ENCODE measurements at regions of chr11 and their contacts with region 1.

Region 1: DNA sequence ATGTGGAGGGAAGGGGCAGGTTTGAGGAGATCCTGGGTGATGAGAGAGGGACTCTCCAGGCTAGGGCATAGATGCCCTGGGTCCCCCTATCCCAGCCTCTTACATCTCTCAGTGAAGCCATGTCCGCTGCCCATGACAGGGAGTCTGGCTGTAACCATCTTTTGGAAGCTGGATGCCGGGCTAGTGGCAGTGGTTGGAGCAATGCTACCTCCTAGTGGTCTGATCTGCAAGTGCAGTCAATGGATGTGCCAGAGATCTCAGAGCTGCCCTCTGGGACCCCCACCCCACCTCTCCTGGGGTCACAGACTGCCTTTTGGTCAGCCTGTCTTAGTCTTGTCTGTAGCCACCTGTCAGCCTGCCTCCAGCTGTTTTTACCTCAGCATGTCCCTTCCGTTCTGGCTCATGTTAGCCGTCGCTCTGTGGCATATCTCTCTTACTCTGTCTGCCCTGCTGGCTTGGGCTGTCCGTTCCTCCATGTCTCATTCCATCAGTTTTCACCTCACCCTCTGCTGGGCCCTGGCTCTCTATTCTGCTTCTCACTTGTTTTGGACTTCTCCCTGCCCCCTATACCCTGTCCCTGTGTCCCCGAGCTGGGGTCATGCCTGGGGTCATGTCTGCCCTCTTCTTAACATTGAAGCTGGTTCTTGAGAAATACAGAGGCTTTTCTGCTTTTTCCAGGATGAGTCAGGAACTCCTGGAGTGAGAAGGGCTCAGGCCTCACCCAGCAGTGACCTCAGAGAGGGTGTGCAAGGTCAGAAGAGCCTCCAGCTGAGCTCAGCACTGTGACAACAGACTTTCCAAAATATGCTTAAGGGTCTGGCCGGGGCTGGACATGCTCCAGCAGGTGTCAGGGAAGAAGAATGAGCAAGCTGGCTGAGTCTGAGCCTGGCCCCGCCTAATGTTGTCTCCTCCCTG is 52.0 kb upstream of the THY1 start:
- DNase-seq: peak; percentile 27
- H3K4me3 Mint-ChIP-seq: no peak overlapping the region
- H3K27ac Mint-ChIP-seq: no peak overlapping the region
- H3K4me1 Mint-ChIP-seq: peaks cover 4% of the 10 kb centered on the region
- H3K27me3 Mint-ChIP-seq: peaks cover 1% of the 10 kb centered on the region

Region 2: GRCh38 chr11:118740892-118741291 is 734.0 kb before region 1 on chr11:
- intact Hi-C with region 1: no loop called
- DNase-seq: no peak
- H3K4me3 Mint-ChIP-seq: no peak overlapping the region
- H3K27ac Mint-ChIP-seq: no peak overlapping the region
- H3K4me1 Mint-ChIP-seq: no peaks in the 10 kb centered on the region
- H3K27me3 Mint-ChIP-seq: peaks cover 9% of the 10 kb centered on the region

Region 3: GRCh38 chr11:119381181-119381988 is 93.6 kb before region 1 on chr11 and contains the start of gene USP2:
- intact Hi-C with region 1: loop called (anchors 2 kb)
- DNase-seq: peak; percentile 95
- H3K4me3 Mint-ChIP-seq: no peak within 1 kb of the TSS
- H3K27ac Mint-ChIP-seq: no peak within 1 kb of the TSS
- H3K4me1 Mint-ChIP-seq: peaks cover 12% of the 10 kb centered on the region
- H3K27me3 Mint-ChIP-seq: peaks cover 3% of the 10 kb centered on the region
- total RNA-seq, gene USP2: 1.0 and 1.1 TPM in 2 replicates

Region 4: DNA sequence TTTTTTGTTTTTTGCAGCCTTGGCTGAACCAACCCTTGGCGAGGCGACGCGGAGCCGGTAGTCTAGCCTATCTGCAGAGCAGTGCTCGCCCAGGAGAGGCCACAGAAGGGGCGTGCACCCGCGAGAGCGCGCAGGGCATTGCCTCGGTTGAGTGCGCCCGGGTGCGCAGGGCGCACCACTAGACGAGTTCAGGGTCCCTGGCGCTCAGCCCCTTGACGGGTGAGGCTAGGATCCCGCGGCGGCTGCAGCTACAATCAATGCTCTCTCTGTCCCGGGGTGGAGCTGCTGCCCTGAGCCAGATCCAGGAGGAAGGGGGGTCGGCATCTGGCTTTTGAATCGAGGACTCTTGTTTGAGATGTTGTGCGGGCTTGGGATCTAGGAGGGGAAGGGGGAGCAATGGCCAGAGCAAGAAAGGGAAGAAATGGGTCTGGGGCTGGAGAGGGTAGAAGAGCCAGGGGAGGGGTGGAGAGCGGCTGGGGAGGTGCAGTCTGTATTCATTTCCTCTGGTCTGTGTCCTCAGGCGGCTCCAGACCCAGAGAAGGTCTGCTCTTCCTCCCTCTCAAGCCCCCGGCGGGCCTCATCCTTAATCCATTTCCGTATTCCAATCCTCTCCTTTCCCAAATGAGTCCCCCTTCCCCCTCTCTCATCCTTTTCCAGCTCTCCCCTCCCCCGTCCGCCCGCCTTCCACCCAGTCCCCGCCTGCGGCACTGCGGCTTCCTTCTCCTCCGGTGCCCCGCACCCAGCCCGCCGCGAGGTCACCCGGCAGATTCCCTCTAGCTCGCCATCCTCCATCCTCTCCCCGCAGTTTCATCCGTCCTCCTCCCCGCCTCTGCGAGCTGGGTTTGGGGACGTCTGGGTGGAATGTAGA is 52.8 kb before region 1 on chr11:
- intact Hi-C with region 1: loop called (anchors 10 kb)
- DNase-seq: no peak
- H3K4me3 Mint-ChIP-seq: peak overlapping the region; percentile 82
- H3K27ac Mint-ChIP-seq: peak overlapping the region; percentile 62
- H3K4me1 Mint-ChIP-seq: peaks cover 34% of the 10 kb centered on the region
- H3K27me3 Mint-ChIP-seq: peaks cover 7% of the 10 kb centered on the region

Measured in activated T-helper 2 cell treated with anti-CD3 and anti-CD28 coated beads, Interferon-gamma antibody, Interleukin-2, Interleukin-4, amounts not matched to agents 10 μg/mL and 5 μg/mL and 100 μg/mL, durations not matched to agents 14 hours and 24 hours and 36 hours (primary cell).